Testis (tissue), 5 donors: ENCODE measurements at regions of chr2 and their contacts with region 1.

Region 1: DNA sequence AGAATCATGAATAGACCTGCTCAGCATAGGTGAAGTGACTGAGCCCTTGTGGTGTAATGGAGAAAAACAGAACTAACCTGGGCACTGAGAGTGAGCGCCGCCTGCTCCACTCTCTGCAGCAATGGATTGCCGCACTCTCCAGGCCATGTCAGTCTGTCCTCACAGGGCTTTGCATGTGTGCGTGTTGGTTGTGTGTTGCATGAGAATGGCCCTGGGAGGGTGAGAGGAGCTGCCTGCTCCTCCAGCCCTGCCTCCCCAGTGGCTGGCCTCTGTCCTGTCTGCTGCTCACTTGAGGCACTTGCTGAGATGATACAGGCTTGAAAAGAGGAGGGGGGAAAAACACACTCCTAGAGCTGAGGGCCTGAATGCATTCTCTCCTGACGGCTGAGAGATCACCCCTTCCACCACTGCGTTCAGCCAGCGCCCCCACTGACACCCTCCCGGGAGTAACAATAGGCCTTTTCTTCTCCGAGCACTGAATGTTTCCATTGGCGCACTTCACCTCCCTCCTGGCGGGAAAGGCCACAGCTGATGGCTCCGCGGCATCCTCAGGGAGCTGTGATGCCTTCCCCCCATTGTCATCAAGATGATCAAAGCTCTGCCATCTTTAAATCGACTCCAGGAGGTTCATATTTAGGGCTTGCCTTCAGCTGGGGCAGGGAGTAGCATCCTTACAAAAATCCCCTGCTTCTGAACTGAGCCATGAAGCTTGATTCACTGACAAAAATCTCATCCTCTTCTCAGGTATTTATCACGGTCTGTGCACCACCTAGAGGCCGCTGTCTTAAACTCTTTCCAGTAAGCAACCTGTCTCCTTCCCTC is 49.9 kb upstream of the DAPL1 start:
- DNase-seq: peak; percentile 81
- H3K4me3 ChIP-seq: no peak overlapping the region
- H3K27ac ChIP-seq: no peak overlapping the region
- H3K4me1 ChIP-seq: peaks cover 14% of the 10 kb centered on the region
- H3K27me3 ChIP-seq: no peaks in the 10 kb centered on the region
- CTCF ChIP-seq: peak; percentile 31 to 53 (median 36)
- POLR2A ChIP-seq: no peak

Region 2: GRCh38 chr2:158034199-158034866 is 710.9 kb before region 1 on chr2:
- intact Hi-C with region 1: loop called (anchors 10 kb)
- DNase-seq: peak; percentile 73
- H3K4me3 ChIP-seq: no peak overlapping the region
- H3K27ac ChIP-seq: no peak overlapping the region
- H3K4me1 ChIP-seq: no peaks in the 10 kb centered on the region
- H3K27me3 ChIP-seq: no peaks in the 10 kb centered on the region
- CTCF ChIP-seq: peak in 2 of 3 experiments; percentile 28 to 29
- POLR2A ChIP-seq: no peak

Region 3: GRCh38 chr2:158202161-158202815 is 543.0 kb before region 1 on chr2:
- intact Hi-C with region 1: no loop called
- DNase-seq: no peak
- H3K4me3 ChIP-seq: no peak overlapping the region
- H3K27ac ChIP-seq: no peak overlapping the region
- H3K4me1 ChIP-seq: no peaks in the 10 kb centered on the region
- H3K27me3 ChIP-seq: no peaks in the 10 kb centered on the region
- CTCF ChIP-seq: no peak
- POLR2A ChIP-seq: no peak